Activated CD8-positive, alpha-beta T cell treated with anti-CD3 and anti-CD28 coated beads, Interleukin-2, amount 10 ng/mL, durations not matched to agents 7 days and 5 days (primary cell): ENCODE measurements at regions of chr2 and their contacts with region 1.

Region 1: DNA sequence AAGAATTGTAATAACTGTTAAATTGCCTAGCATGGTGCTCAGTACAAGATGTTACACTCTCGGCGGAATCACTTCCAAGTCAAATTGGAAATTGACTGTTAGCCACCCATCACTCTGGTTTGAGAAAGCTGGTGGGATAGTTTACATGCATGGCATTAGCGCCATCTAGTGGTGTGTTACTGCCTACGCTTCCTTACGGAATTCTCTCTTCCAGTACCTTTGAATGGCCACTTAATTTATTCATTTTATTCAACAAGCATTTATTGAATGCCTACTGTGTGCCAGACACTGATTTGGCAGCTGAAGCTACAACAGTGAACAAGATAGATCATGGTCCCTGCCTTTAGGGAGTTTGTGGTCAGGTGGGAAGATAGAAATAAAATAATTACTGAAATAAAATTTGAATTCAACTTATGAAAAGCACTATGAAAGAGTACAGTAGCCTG is 171.2 kb downstream of the TMEM247 start:
- DNase-seq: peak; percentile 79
- ATAC-seq: peak; percentile 72
- H3K4me3 Mint-ChIP-seq: no peak overlapping the region
- H3K27ac Mint-ChIP-seq: no peak overlapping the region
- H3K4me1 Mint-ChIP-seq: no peaks in the 10 kb centered on the region
- H3K27me3 Mint-ChIP-seq: peaks cover 3% of the 10 kb centered on the region

Region 2: DNA sequence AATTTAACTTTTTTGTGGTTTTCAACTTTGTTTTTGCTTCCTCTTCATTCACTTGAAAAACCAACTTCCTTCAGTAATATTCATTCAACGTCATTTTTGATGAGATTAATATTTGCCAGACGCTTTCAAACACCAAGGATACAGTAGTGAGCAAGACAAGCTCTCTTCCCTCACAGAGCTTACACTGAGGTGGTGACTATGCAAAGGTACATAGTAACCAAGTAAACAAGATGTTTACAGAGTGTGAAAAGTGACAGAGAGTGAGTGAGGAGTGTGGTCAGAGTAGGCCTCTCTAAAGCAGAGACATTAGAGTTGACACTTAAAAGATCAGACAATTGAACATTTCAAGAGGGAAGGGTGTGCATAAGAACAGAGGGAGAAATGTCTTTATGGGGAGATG is 15.7 kb before region 1 on chr2:
- CTCF ChIA-PET with region 1: interaction called, 24 read pairs
- POLR2A ChIA-PET with region 1: interaction called, 4 read pairs
- DNase-seq: no peak
- ATAC-seq: peak; percentile 96
- H3K4me3 Mint-ChIP-seq: no peak overlapping the region
- H3K27ac Mint-ChIP-seq: peak overlapping the region; percentile 66
- H3K4me1 Mint-ChIP-seq: peaks cover 10% of the 10 kb centered on the region
- H3K27me3 Mint-ChIP-seq: no peaks in the 10 kb centered on the region

Region 3: DNA sequence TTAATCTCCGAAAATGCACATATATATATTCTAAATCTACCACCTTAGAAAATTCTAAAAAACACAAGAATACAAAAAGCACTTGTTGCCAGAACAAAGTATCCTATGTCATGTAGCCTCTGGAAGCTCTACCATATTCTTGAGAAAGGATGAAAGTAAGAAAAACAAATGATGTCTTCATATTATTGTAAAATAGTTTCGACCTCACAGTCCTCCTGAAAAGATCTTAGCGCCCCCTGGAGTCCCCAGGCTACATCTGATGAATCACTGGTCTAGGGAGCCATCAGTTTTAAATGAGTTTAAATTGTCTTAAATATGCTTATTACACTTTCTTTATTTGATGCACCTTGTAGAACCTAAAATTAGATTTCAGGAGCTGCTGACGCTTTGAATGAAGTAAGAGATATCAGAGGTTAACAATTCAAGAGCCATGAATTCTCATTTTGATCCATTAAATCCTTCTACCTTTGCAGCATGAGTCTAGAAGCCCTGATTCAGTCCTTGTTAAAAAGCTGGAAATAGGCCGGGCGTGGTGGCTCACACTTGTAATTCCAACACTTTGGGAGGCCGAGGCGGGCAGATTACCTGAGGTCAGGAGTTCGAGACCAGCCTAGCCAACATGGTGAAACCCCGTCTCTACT is 126.2 kb after region 1 on chr2:
- CTCF ChIA-PET with region 1: interaction called, 20 read pairs
- POLR2A ChIA-PET with region 1: no interaction called
- DNase-seq: peak; percentile 76
- ATAC-seq: peak; percentile 57
- H3K4me3 Mint-ChIP-seq: no peak overlapping the region
- H3K27ac Mint-ChIP-seq: no peak overlapping the region
- H3K4me1 Mint-ChIP-seq: no peaks in the 10 kb centered on the region
- H3K27me3 Mint-ChIP-seq: peaks cover 3% of the 10 kb centered on the region

Region 4: DNA sequence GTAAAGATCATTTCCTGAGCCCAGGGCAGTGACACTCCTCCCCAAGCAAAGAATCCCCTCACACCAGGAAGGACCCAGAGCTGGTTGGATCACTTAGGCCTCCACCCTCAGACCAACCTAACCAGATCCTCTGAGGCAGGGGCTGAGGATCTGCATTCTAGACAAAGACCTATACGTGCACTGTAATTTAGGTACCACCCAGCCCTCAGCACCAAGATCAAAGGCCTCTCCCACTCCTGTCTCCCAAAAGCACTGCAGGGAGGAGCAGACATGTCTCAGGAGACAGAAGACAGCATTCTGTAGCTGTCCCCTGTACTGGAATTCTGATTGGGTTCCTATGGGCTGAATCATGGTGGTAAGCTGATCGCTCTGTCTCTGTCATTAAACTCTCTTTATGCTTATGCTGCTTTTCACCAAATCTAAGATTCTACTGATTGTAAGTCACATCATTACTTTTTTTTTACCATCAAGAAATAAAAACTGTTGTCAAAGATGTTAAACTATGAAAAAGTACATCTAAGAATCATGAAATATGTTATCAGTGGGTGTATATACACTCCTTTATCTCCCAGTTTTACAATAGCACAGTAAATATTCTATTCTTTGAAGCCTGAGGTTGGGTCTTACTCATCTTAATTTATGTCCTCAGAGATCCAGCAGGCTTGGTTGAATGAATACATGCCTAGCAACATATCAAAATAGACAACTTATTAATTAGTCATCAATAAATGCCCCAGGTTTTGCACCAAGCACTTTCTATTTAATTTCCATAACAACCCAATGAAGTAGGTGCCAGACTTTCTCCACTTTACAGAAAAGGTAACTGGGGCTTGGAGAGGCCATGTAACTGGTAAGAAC is 236.7 kb after region 1 on chr2:
- CTCF ChIA-PET with region 1: interaction called, 22 read pairs
- POLR2A ChIA-PET with region 1: no interaction called
- DNase-seq: no peak
- ATAC-seq: no peak
- H3K4me3 Mint-ChIP-seq: no peak overlapping the region
- H3K27ac Mint-ChIP-seq: no peak overlapping the region
- H3K4me1 Mint-ChIP-seq: no peaks in the 10 kb centered on the region
- H3K27me3 Mint-ChIP-seq: peaks cover 12% of the 10 kb centered on the region